ENCODE measurements at regions of chr6 and their contacts with region 1.

Region 1: DNA sequence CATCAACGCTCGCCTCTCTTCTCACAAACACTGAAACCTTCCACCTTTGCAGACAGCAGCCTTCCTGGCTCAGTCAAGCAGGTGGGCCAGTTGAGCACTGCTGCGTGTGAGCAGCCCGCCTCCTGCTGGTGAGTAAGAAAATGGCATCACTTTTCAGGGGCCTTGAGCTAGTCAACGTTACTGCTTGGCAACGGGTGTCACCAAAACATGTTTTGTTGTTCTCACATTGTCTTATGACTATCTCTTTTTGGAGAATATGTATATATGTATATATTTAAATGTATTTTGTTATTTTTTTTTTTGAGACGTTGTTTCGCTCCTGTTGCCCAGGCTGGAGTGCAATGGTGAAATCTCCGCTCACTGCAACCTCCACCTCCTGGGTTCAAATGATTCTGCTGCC is 97.0 kb upstream of the AGPAT4 start:
- DNase-seq: peak; percentile 72 to 76 (median 73)
- H3K4me3 ChIP-seq: no peak overlapping the region
- H3K4me3 Mint-ChIP-seq: no peak overlapping the region
- H3K27ac ChIP-seq: no peak overlapping the region
- H3K27ac Mint-ChIP-seq: peak overlapping the region in 3 of 7 donors; percentile 6 to 13 (median 7)
- H3K4me1 ChIP-seq: no peaks in the 10 kb centered on the region
- H3K4me1 Mint-ChIP-seq: peaks cover 0 to 3% (median 1%) of the 10 kb centered on the region in 4 donors
- H3K27me3 ChIP-seq: no peaks in the 10 kb centered on the region
- H3K27me3 Mint-ChIP-seq: no peaks in the 10 kb centered on the region

Region 2: DNA sequence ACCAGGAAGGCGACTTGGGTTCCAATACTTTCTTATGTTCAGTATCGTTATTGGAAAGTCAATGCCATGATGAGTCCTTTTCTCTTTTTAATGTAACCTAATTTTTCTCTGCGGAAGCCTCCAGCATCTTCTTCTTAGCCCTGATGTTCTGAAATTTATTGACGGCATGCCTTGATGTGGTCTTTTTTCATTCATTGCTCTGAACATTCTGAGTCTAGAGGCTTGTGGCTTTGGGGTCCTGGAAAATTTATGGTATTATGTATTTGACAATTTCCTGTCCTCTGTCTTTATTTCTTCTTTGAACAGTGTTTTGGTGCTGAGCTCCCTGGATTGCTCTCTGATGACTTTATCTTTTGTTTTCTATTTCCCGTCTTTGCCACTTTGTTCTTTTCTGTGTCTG is 1508.8 kb before region 1 on chr6:
- CTCF ChIA-PET with region 1: interaction called, 3 read pairs
- POLR2A ChIA-PET with region 1: no interaction called
- intact Hi-C with region 1: loop called (anchors 5 kb)
- DNase-seq: peak in 4 of 5 donors; percentile 25 to 38 (median 32)
- H3K4me3 ChIP-seq: no peak overlapping the region
- H3K4me3 Mint-ChIP-seq: peak overlapping the region in 6 of 8 donors; percentile 1 to 53 (median 16)
- H3K27ac ChIP-seq: no peak overlapping the region
- H3K27ac Mint-ChIP-seq: peak overlapping the region; percentile 5 to 76 (median 62)
- H3K4me1 ChIP-seq: peaks cover 14% of the 10 kb centered on the region
- H3K4me1 Mint-ChIP-seq: peaks cover 10 to 17% (median 16%) of the 10 kb centered on the region in 4 donors
- H3K27me3 ChIP-seq: no peaks in the 10 kb centered on the region
- H3K27me3 Mint-ChIP-seq: peaks cover 7 to 8% of the 10 kb centered on the region in 2 donors

Region 3: GRCh38 chr6:160733050-160733646 is 637.7 kb before region 1 on chr6:
- CTCF ChIA-PET with region 1: interaction called, 23 read pairs
- POLR2A ChIA-PET with region 1: no interaction called
- intact Hi-C with region 1: no loop called
- DNase-seq: peak; percentile 11 to 44 (median 18)
- H3K4me3 ChIP-seq: no peak overlapping the region
- H3K4me3 Mint-ChIP-seq: no peak overlapping the region
- H3K27ac ChIP-seq: no peak overlapping the region
- H3K27ac Mint-ChIP-seq: no peak overlapping the region
- H3K4me1 ChIP-seq: no peaks in the 10 kb centered on the region
- H3K4me1 Mint-ChIP-seq: no peaks in the 10 kb centered on the region
- H3K27me3 ChIP-seq: no peaks in the 10 kb centered on the region
- H3K27me3 Mint-ChIP-seq: peaks cover 4% of the 10 kb centered on the region in 2 donors

Region 4: DNA sequence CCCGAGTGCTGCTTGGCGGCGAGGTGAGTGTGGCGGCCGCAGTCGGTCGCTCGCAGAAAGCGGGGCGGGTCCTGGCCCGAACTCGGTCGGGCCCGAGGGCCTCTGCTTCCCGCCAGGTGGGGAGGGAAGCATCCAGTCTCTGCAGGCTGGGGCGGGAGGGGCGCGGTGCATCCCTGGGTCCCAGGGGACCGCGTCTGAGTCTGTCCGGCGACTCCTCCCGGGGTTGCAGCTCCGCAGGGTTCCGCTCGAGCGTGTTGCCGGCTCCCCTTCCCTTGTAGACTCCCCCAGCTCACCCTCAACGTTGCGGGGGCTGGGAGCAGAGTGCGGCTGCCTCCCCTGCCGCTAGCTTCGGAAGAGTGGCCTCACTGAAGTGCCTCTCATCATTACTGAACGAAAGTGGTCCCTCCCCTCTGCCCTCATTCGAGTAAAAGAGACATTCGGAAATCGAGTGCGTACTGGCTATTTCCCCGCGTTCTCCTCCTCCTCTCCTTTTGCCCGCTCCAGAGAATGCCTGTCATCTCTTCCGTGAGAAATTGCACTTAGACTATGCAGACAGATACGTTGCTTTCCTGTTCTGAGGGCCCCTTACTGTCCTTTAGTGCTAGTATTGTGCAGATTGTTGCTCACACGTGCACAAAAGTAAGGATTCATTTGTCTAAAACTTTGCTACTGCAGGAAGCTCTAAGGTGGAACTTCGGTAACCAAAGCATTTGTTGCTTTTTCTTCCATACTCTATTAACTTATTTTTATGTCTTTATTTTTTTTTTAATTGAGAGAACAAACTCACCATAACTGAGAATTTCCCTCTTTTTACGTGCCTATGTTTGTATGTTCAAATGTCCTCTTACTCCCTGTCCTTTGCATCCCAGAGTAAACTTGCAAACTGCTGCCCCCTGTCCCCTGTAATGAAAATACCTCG is 378.6 kb before region 1 on chr6:
- CTCF ChIA-PET with region 1: interaction called, 11 read pairs
- POLR2A ChIA-PET with region 1: no interaction called
- intact Hi-C with region 1: loop called (anchors 2 kb)
- DNase-seq: peak; percentile 32 to 77 (median 63)
- H3K4me3 ChIP-seq: peak overlapping the region; percentile 85 to 89
- H3K4me3 Mint-ChIP-seq: peak overlapping the region; percentile 91 to 100 (median 97)
- H3K27ac ChIP-seq: peak overlapping the region; percentile 73
- H3K27ac Mint-ChIP-seq: peak overlapping the region; percentile 96 to 99 (median 98)
- H3K4me1 ChIP-seq: peaks cover 45% of the 10 kb centered on the region
- H3K4me1 Mint-ChIP-seq: peaks cover 32 to 52% (median 42%) of the 10 kb centered on the region in 4 donors
- H3K27me3 ChIP-seq: no peaks in the 10 kb centered on the region
- H3K27me3 Mint-ChIP-seq: no peaks in the 10 kb centered on the region

Region 5: GRCh38 chr6:161152907-161153662 is 217.8 kb before region 1 on chr6:
- CTCF ChIA-PET with region 1: interaction called, 54 read pairs
- POLR2A ChIA-PET with region 1: no interaction called
- intact Hi-C with region 1: loop called (anchors 2 kb)
- DNase-seq: no peak
- H3K4me3 ChIP-seq: no peak overlapping the region
- H3K4me3 Mint-ChIP-seq: no peak overlapping the region
- H3K27ac ChIP-seq: no peak overlapping the region
- H3K27ac Mint-ChIP-seq: no peak overlapping the region
- H3K4me1 ChIP-seq: no peaks in the 10 kb centered on the region
- H3K4me1 Mint-ChIP-seq: no peaks in the 10 kb centered on the region
- H3K27me3 ChIP-seq: no peaks in the 10 kb centered on the region
- H3K27me3 Mint-ChIP-seq: no peaks in the 10 kb centered on the region

Region 6: DNA sequence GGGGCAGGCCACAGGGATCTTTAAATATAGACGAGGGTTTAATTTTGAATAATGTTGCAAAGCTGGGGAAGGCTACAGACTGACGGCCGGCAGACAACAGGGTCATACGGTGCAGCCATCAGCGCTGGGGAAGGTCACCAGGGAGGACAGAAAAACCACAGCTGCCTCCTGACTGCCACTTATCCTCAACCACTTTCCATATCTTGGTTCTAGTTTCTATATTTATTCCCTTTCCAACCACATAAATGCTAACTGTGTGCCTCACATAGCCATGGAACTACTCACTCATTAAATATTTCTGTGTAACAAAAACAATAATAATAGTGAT is 11.3 kb before region 1 on chr6:
- CTCF ChIA-PET with region 1: interaction called, 30 read pairs
- POLR2A ChIA-PET with region 1: no interaction called
- intact Hi-C with region 1: no loop called
- DNase-seq: no peak
- H3K4me3 ChIP-seq: no peak overlapping the region
- H3K4me3 Mint-ChIP-seq: no peak overlapping the region
- H3K27ac ChIP-seq: no peak overlapping the region
- H3K27ac Mint-ChIP-seq: no peak overlapping the region
- H3K4me1 ChIP-seq: no peaks in the 10 kb centered on the region
- H3K4me1 Mint-ChIP-seq: peaks cover 0 to 5% (median 3%) of the 10 kb centered on the region in 4 donors
- H3K27me3 ChIP-seq: no peaks in the 10 kb centered on the region
- H3K27me3 Mint-ChIP-seq: peaks cover 0 to 2% of the 10 kb centered on the region in 2 donors

Measured in CD4-positive, alpha-beta memory T cell (primary cell).